Calu3 (cell line): ENCODE measurements at regions of chr9 and their contacts with region 1.

Region 1: GRCh38 chr9:104927912-104928740 is at the start of gene ABCA1:
- DNase-seq: peak; percentile 52
- H3K4me3 Mint-ChIP-seq: peak within 1 kb of the TSS; percentile 73
- H3K27ac Mint-ChIP-seq: no peak within 1 kb of the TSS
- H3K4me1 Mint-ChIP-seq: no peaks in the 10 kb centered on the region
- H3K27me3 Mint-ChIP-seq: no peaks in the 10 kb centered on the region
- CTCF ChIP-seq: no peak
- total RNA-seq, gene ABCA1: 0.76 and 0.78 TPM in 2 replicates

Region 2: DNA sequence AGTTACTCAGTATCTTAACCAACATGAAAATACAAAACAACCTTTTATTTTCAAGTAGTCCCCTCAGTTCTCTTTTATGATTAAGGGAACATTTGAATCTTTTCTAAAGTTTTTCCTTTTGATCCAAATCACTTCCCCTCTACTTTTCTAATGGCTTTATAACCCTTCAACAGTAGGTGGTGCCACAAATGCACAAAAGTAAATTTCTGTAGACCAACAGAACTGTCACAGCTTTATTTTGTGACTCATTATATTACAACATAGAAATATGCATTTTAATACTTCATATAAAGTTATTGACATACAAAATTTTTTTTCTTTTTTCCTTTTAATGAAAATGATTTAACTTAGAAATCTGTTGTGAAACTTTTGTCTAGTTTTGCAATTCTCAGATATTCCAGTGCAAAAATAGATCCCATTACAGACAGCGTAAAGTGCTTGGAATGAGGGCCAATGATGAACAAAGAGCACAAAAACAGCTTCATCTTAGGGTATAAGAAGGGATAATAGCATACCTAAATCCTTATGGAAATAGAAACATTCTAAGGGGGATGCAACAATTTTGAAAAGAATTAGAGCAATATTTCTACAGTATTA is 147.2 kb before region 1 on chr9:
- CTCF ChIA-PET with region 1: no interaction called
- intact Hi-C with region 1: loop called (anchors 5 kb)
- DNase-seq: peak; percentile 13
- H3K4me3 Mint-ChIP-seq: no peak overlapping the region
- H3K27ac Mint-ChIP-seq: no peak overlapping the region
- H3K4me1 Mint-ChIP-seq: no peaks in the 10 kb centered on the region
- H3K27me3 Mint-ChIP-seq: peaks cover 10% of the 10 kb centered on the region
- CTCF ChIP-seq: peak; percentile 20

Region 3: GRCh38 chr9:104836235-104836634 is 91.9 kb before region 1 on chr9:
- CTCF ChIA-PET with region 1: no interaction called
- intact Hi-C with region 1: no loop called
- DNase-seq: no peak
- H3K4me3 Mint-ChIP-seq: no peak overlapping the region
- H3K27ac Mint-ChIP-seq: no peak overlapping the region
- H3K4me1 Mint-ChIP-seq: peaks cover 15% of the 10 kb centered on the region
- H3K27me3 Mint-ChIP-seq: no peaks in the 10 kb centered on the region
- CTCF ChIP-seq: no peak

Region 4: DNA sequence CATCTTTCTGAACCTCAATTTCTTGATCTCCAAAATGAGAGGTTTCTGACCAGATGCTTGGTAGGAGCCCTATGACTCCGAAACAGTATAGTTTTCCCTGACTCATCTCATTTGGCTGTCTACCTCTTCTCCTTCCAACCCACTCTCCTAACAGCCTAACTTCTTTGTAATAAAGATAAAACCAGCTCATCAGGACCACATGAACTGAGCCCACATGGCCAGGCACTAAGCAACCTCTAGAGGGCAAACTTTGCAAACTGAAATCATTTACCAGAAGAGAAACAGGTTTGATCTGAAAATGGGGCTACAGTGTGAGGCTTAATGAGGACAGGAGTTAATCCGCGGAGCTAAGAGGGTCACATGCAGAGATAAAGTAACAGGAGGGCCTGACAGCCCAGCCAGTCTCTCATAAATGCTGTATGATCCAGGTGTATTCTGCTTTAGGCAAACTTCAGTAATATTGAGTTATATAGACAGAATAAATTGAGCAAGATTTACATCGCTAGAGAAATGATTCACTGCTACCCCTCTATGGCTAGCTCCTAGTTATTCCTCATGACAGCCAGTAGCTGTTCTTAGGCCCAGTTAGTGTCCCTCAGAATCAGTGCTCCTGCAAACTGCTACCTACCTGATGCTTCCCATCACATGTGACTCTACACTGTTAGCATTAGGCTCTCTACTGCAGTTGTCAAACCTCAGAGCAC is 64.8 kb before region 1 on chr9:
- CTCF ChIA-PET with region 1: interaction called, 3 read pairs
- intact Hi-C with region 1: loop called (anchors 5 kb)
- DNase-seq: peak; percentile 44
- H3K4me3 Mint-ChIP-seq: no peak overlapping the region
- H3K27ac Mint-ChIP-seq: no peak overlapping the region
- H3K4me1 Mint-ChIP-seq: peaks cover 13% of the 10 kb centered on the region
- H3K27me3 Mint-ChIP-seq: no peaks in the 10 kb centered on the region
- CTCF ChIP-seq: peak; percentile 32

Region 5: GRCh38 chr9:105007143-105007542 is 79.0 kb after region 1 on chr9:
- CTCF ChIA-PET with region 1: interaction called, 13 read pairs
- intact Hi-C with region 1: no loop called
- DNase-seq: peak; percentile 25
- H3K4me3 Mint-ChIP-seq: no peak overlapping the region
- H3K27ac Mint-ChIP-seq: peak overlapping the region; percentile 77
- H3K4me1 Mint-ChIP-seq: peaks cover 12% of the 10 kb centered on the region
- H3K27me3 Mint-ChIP-seq: no peaks in the 10 kb centered on the region
- CTCF ChIP-seq: no peak

Region 6: DNA sequence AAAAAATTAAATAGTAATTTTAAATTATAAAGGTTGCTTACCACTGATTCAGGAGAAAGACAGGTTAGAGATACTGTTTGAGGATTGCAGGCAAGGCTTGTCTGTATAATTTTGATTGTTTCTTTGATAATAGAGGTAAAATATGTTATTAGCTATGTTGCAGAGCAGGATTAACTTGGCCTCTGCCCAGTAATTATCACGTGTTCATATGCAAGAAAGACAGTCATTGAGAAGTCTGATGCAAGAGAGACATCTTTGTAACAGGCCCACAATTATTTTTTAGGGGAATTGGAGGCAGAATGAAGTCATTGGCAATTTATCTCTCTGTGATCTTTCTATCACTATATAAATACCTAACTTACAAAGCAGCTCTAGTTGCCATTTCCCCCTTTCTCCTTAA is 362.3 kb after region 1 on chr9:
- CTCF ChIA-PET with region 1: interaction called, 15 read pairs
- intact Hi-C with region 1: no loop called
- DNase-seq: peak; percentile 30
- H3K4me3 Mint-ChIP-seq: no peak overlapping the region
- H3K27ac Mint-ChIP-seq: peak overlapping the region; percentile 68
- H3K4me1 Mint-ChIP-seq: peaks cover 23% of the 10 kb centered on the region
- H3K27me3 Mint-ChIP-seq: no peaks in the 10 kb centered on the region
- CTCF ChIP-seq: no peak

Region 7: DNA sequence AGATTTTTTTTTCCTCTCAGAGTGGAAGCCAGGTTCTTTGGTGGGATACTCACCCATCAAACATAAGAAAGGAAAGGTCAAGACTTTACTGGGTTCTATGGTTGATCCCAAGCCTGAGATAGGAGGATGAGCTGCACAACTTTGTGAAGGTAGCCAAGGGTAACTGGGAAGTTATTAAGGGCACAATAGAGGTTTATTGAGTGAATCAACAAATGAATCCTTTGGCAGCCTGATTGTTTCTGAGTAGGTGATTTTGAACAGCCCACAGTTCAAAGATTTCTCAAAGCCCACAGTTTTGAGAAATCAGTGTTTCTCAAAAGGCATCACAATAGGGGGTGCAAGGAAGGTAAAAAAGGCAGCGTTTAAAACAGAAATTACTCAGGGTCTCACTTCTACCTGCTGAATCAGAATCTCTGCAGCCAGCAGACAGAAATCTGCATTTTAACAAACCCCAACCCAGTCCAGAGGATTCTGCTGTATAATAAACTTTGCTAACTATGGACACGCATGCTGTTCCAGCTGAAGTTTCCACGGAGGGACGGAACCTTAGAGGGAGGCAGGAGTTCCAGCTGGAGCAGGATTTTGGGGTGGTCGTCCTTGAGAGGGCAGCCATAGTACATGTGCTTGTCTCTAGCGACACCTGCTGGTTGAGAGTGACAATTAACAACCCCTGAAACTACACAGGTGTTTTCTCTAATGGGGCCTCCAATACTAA is 487.0 kb after region 1 on chr9:
- CTCF ChIA-PET with region 1: no interaction called
- intact Hi-C with region 1: loop called (anchors 5 kb)
- DNase-seq: peak; percentile 41
- H3K4me3 Mint-ChIP-seq: no peak overlapping the region
- H3K27ac Mint-ChIP-seq: no peak overlapping the region
- H3K4me1 Mint-ChIP-seq: no peaks in the 10 kb centered on the region
- H3K27me3 Mint-ChIP-seq: no peaks in the 10 kb centered on the region
- CTCF ChIP-seq: peak; percentile 78